ENCODE measurements at regions of chr9 and their contacts with region 1.

Region 1: DNA sequence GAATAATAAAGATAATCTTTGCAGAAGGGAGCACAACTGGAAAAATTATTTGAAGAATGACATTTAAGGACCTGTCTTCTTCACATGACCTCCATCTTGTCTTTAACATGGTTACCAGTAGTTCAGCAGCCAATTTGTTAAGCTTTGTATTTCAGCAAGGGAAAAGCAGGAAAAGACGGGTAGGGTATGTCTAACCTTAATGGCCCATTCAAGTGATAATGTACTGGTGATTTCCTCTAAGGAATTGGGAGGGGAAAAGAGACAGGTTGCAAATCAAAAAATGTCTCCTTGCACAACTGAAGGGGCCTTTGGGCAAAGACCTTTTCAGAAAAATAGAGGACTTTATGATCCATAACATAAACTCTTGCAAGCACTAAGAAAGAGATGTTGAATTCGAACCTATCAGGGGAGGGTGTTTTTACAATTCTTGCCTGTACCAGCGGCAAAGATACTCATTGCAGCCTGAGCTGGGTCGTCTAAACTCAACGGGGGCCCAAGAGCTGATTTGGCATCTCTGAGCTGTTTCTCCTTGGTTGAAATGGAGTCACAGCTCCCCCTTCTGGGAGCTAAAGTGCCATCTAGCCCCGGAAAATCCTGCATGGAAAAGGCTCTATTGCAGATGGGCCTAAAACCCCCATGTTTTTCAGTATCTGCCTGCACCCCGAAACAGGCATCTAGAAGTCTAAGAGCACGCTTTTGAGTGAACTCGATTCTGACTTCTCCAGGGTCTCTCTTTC is 3.8 kb downstream of the BRINP1 start:
- DNase-seq: no peak
- H3K4me3 ChIP-seq: no peak overlapping the region
- H3K27ac ChIP-seq: no peak overlapping the region
- H3K4me1 ChIP-seq: peaks cover 0 to 10% (median 4%) of the 10 kb centered on the region in 4 donors
- H3K27me3 ChIP-seq: peaks cover 49% of the 10 kb centered on the region
- CTCF ChIP-seq: peak in 2 of 5 experiments; percentile 28 to 33
- EP300 ChIP-seq: no peak
- POLR2A ChIP-seq: no peak

Region 2: DNA sequence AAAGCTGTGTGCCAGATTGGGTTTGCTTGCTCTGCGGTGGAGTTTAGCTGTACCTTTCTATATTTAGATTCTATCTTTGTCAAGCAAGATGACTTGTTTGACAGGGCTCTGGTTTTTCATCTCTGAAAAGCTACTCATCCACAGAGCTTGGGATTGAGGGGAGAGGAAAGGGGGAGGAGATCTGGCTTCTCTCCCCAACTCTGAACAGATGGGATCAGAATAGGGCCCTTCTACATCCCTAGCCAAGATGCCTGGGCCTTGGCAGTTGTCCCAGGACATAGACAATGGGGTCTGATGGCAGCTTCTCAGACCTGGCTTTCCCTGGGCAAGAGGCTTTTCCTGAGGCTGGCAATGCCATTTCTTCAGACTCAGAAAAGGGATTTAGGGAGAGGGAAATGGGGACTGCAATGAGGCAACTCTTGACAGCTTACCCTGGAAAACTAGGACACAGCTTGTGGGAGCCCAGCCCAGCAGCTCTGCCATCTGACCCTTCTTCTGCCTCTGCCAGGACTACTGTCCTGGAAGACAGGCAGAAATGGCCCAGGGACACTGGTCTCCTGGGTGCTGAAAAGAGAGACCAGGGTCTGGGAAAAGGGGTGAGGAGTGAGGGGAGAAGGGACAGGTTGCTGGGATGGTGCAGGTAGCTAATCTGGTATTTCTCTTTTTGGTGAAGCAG is 1900.4 kb before region 1 on chr9:
- in situ Hi-C with region 1: loop called in 1 of 4 experiments (anchors 25 kb)
- intact Hi-C with region 1: no loop called
- DNase-seq: no peak
- H3K4me3 ChIP-seq: no peak overlapping the region
- H3K27ac ChIP-seq: no peak overlapping the region
- H3K4me1 ChIP-seq: peaks cover 0 to 5% (median 0%) of the 10 kb centered on the region in 4 donors
- H3K27me3 ChIP-seq: no peaks in the 10 kb centered on the region
- CTCF ChIP-seq: no peak
- EP300 ChIP-seq: no peak
- POLR2A ChIP-seq: no peak

Region 3: GRCh38 chr9:119074017-119074416 is 291.4 kb before region 1 on chr9:
- in situ Hi-C with region 1: no loop called
- intact Hi-C with region 1: no loop called
- DNase-seq: no peak
- H3K4me3 ChIP-seq: no peak overlapping the region
- H3K27ac ChIP-seq: no peak overlapping the region
- H3K4me1 ChIP-seq: no peaks in the 10 kb centered on the region
- H3K27me3 ChIP-seq: no peaks in the 10 kb centered on the region
- CTCF ChIP-seq: no peak
- EP300 ChIP-seq: no peak
- POLR2A ChIP-seq: no peak

Measured in transverse colon (tissue), 4 donors.